ENCODE measurements at regions of chr12 and their contacts with region 1.

Region 1: DNA sequence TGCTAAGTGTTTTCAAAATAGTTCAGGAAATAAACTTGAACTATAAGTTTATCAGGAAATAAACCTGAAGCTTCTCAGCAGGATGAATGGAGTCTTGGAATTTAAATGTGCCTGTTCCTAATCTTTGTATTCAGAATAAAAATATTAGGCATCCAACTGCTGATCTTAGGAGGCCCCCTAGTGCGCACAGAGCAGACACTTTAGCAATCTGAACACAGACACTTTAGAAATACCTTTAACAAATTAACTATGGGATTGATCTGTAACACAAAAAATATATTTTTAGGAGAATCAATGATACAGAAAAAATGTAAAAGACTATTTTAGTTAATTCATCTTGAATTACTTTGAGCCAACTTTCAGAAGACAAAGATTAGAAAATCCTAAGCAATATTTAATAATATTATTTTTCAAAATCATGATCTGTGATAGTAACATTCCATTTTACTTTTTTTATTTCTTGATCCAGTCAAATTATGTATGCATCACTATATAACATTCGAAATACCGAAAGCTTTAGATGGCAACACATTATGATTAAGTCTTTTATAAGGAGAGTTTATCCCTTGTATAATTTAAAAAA is 80.9 kb downstream of the SLC41A2 start:
- DNase-seq: no peak
- H3K4me3 ChIP-seq: no peak overlapping the region
- H3K27ac ChIP-seq: no peak overlapping the region
- H3K4me1 ChIP-seq: peaks cover 0 to 12% (median 7%) of the 10 kb centered on the region in 4 donors
- H3K27me3 ChIP-seq: no peaks in the 10 kb centered on the region
- CTCF ChIP-seq: peak; percentile 50 to 68 (median 62)
- EP300 ChIP-seq: no peak
- POLR2A ChIP-seq: no peak

Region 2: DNA sequence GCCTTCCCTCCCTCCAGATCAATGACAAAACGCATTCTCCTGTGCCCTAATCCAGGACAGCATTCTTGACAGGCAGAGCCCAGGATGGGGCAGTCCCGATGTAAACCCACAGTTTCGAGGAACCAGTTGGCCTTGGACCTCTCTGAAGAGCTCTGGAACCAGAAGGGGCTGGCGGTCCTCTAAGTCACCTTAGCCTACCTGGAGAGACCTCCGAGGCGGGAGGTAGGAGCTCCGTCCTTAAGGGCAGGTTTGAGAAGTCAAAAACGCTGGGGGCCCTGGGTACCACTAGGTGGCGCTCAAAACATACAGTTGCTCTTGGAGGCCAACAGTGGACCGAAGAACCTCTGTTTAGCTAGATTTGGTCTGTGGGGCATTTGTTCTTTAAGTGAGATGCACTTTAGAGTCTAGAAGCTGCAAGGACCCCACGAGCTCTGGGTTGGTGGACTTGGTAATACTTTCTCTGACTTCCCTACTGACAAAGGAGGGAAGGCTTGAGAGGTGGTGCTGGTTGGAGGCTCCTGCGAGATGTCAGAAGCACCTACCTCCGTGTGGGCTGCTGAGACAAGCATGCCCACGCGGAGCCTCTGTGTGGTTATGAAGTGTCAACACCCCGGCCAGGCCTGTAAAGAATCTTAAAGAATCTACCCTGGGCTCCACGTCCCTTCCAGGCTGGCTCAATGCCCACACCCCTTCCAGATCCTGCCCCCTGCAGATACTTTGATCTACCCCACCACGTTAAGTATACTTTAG is 495.3 kb before region 1 on chr12:
- intact Hi-C with region 1: loop called (anchors 1 kb)
- DNase-seq: peak; percentile 87
- H3K4me3 ChIP-seq: no peak overlapping the region
- H3K27ac ChIP-seq: no peak overlapping the region
- H3K4me1 ChIP-seq: peaks cover 0 to 12% (median 4%) of the 10 kb centered on the region in 4 donors
- H3K27me3 ChIP-seq: no peaks in the 10 kb centered on the region
- CTCF ChIP-seq: peak; percentile 83 to 95 (median 94)
- EP300 ChIP-seq: no peak
- POLR2A ChIP-seq: no peak

Region 3: DNA sequence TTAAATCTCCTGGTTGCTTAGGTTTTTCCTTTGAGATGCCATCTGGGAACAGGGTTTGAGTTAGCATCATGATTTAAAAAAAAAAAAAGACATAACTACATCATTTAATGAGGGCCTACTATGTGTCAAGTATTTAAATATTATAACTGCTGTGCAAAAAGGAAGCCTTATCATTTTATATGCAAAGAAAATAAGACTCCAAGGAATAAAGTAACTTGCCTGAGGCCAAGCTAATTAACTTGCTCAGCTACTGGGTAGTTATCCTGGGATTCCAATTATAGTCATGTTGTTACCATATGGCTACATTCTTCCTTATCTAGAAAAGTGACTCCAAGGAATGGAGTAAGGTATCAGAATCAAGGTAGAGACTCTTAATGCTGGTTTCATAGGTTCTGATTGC is 42.6 kb before region 1 on chr12:
- intact Hi-C with region 1: no loop called
- DNase-seq: no peak
- H3K4me3 ChIP-seq: no peak overlapping the region
- H3K27ac ChIP-seq: no peak overlapping the region
- H3K4me1 ChIP-seq: no peaks in the 10 kb centered on the region
- H3K27me3 ChIP-seq: no peaks in the 10 kb centered on the region
- CTCF ChIP-seq: no peak
- EP300 ChIP-seq: no peak
- POLR2A ChIP-seq: no peak